Activated B cell treated with CpG ODN at 0.5 μM for 24 hours (primary cell): ENCODE measurements at regions of chr21 and their contacts with region 1.

Region 1: DNA sequence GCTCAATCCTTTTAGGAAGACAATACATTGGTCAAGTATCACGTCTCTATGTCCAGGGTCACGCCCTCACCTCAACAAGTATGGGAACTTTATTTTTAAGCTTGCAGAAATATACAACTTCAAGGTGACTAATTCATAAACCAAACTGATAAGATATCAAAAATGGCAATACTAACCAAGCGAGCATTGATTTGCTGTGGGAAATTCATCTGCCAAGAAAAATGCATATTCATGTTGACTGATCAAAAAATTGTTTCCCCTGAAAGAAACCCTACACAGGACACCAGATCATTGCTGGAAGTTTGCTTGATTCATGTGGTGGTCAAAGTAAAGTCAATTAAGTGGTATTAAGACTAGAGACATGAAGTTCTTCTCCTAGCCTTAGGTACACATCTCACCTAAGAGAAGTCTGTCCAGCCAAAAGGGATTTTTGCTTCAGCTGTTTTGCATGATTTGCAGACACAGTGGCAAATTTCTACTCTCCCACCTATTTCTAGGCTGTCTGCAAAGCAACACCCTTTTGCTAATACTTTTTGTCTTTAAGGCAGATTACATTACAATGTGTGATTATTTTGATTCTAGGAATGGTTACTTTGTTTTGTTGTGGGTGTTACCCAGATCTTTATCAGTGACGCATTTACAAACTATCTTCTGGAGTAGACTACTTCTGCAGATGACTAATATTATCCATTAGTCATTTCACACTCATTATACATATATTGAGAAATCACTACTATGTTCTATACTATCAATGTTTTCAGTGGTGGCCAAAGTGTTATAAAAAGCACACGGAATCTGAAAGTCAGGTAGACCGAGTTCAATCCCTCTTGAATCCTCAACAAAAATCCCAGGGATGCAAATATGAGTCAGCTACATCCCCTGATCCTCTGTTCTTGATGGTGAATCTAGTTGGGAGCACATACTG is 12.3 kb downstream of the SAMSN1 start:
- DNase-seq: no peak
- ATAC-seq: peak; percentile 85
- H3K4me3 Mint-ChIP-seq: peak overlapping the region; percentile 71
- H3K27ac Mint-ChIP-seq: peak overlapping the region; percentile 98
- H3K4me1 Mint-ChIP-seq: peaks cover 79% of the 10 kb centered on the region
- H3K27me3 Mint-ChIP-seq: no peaks in the 10 kb centered on the region
- CTCF ChIP-seq: no peak

Region 2: GRCh38 chr21:14457762-14458161 is 76.0 kb before region 1 on chr21:
- CTCF ChIA-PET with region 1: no interaction called
- POLR2A ChIA-PET with region 1: no interaction called
- intact Hi-C with region 1: no loop called
- DNase-seq: no peak
- ATAC-seq: no peak
- H3K4me3 Mint-ChIP-seq: no peak overlapping the region
- H3K27ac Mint-ChIP-seq: no peak overlapping the region
- H3K4me1 Mint-ChIP-seq: peaks cover 11% of the 10 kb centered on the region
- H3K27me3 Mint-ChIP-seq: no peaks in the 10 kb centered on the region
- CTCF ChIP-seq: no peak

Region 3: DNA sequence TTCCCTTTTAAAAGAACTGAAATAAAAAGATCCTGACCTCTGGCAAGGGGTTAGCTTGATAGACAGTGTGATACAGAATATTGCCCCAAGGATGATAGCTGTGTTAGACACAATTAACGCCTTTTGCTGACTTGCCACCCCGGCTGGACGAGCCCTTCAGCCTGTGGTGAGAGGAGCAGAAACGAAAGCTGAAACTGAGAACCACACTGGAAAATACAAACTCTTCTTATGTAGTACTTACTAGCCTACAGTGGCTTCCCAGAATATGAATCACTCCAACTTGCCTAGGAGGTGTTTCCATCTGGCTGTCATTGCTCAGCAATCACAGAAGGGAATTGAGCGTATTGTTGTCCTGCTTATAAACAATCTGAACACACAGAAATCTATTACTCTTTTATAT is 10.5 kb before region 1 on chr21:
- CTCF ChIA-PET with region 1: interaction called, 4 read pairs
- POLR2A ChIA-PET with region 1: interaction called, 6 read pairs
- intact Hi-C with region 1: loop called (anchors 1 kb)
- DNase-seq: no peak
- ATAC-seq: peak; percentile 60
- H3K4me3 Mint-ChIP-seq: peak overlapping the region; percentile 78
- H3K27ac Mint-ChIP-seq: peak overlapping the region; percentile 82
- H3K4me1 Mint-ChIP-seq: peaks cover 63% of the 10 kb centered on the region
- H3K27me3 Mint-ChIP-seq: no peaks in the 10 kb centered on the region
- CTCF ChIP-seq: no peak

Region 4: GRCh38 chr21:14545906-14546480 is 12.2 kb after region 1 on chr21 and contains the start of gene SAMSN1:
- CTCF ChIA-PET with region 1: interaction called, 3 read pairs
- POLR2A ChIA-PET with region 1: interaction called, 5 read pairs
- intact Hi-C with region 1: loop called (anchors 1 kb)
- DNase-seq: no peak
- ATAC-seq: peak; percentile 93
- H3K4me3 Mint-ChIP-seq: peak within 1 kb of the TSS; percentile 88
- H3K27ac Mint-ChIP-seq: peak within 1 kb of the TSS; percentile 87
- H3K4me1 Mint-ChIP-seq: peaks cover 64% of the 10 kb centered on the region
- H3K27me3 Mint-ChIP-seq: no peaks in the 10 kb centered on the region
- CTCF ChIP-seq: no peak
- total RNA-seq, gene SAMSN1: 48.7 and 49.7 TPM in 2 replicates

Region 5: DNA sequence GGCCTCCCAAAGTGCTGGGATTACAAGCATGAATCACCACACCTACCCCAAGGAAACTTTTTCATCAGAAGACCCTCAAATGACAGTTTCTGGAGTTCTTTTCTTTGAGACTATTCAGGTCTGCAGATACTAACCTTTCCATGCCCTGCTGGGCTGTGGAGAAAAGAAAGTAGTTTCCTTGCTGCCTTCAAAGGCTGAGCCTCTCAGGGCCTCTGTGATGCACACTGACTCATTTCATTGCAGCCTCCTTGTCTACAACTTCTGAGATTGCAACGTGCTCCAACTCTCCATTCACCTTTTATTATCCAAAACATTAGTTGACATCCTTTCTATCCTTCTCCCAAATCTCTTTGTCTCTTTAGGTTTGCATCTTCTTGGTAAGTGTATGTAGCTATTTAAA is 21.2 kb after region 1 on chr21:
- CTCF ChIA-PET with region 1: no interaction called
- POLR2A ChIA-PET with region 1: interaction called, 7 read pairs
- intact Hi-C with region 1: loop called (anchors 1 kb)
- DNase-seq: no peak
- ATAC-seq: no peak
- H3K4me3 Mint-ChIP-seq: no peak overlapping the region
- H3K27ac Mint-ChIP-seq: peak overlapping the region; percentile 59
- H3K4me1 Mint-ChIP-seq: peaks cover 65% of the 10 kb centered on the region
- H3K27me3 Mint-ChIP-seq: no peaks in the 10 kb centered on the region
- CTCF ChIP-seq: no peak

Region 6: GRCh38 chr21:14616303-14617039 is 82.7 kb after region 1 on chr21:
- CTCF ChIA-PET with region 1: no interaction called
- POLR2A ChIA-PET with region 1: no interaction called
- intact Hi-C with region 1: loop called (anchors 5 kb)
- DNase-seq: no peak
- ATAC-seq: peak; percentile 25
- H3K4me3 Mint-ChIP-seq: peak overlapping the region; percentile 49
- H3K27ac Mint-ChIP-seq: peak overlapping the region; percentile 78
- H3K4me1 Mint-ChIP-seq: peaks cover 37% of the 10 kb centered on the region
- H3K27me3 Mint-ChIP-seq: no peaks in the 10 kb centered on the region
- CTCF ChIP-seq: no peak

Region 7: GRCh38 chr21:15015622-15016471 is 482.1 kb after region 1 on chr21:
- CTCF ChIA-PET with region 1: no interaction called
- POLR2A ChIA-PET with region 1: no interaction called
- intact Hi-C with region 1: no loop called
- DNase-seq: no peak
- ATAC-seq: no peak
- H3K4me3 Mint-ChIP-seq: no peak overlapping the region
- H3K27ac Mint-ChIP-seq: no peak overlapping the region
- H3K4me1 Mint-ChIP-seq: peaks cover 21% of the 10 kb centered on the region
- H3K27me3 Mint-ChIP-seq: no peaks in the 10 kb centered on the region
- CTCF ChIP-seq: no peak